Activated T-helper 1 cell treated with anti-CD3 and anti-CD28 coated beads, Interleukin-12 subunit alpha, Interleukin-12 subunit beta, Interleukin-2, Interleukin-4 antibody, amounts not matched to agents 30 ng/mL and 10 ng/mL and 1 ng/mL, durations not matched to agents 14 hours and 24 hours and 36 hours (primary cell): ENCODE measurements at regions of chr17 and their contacts with region 1.

Region 1: DNA sequence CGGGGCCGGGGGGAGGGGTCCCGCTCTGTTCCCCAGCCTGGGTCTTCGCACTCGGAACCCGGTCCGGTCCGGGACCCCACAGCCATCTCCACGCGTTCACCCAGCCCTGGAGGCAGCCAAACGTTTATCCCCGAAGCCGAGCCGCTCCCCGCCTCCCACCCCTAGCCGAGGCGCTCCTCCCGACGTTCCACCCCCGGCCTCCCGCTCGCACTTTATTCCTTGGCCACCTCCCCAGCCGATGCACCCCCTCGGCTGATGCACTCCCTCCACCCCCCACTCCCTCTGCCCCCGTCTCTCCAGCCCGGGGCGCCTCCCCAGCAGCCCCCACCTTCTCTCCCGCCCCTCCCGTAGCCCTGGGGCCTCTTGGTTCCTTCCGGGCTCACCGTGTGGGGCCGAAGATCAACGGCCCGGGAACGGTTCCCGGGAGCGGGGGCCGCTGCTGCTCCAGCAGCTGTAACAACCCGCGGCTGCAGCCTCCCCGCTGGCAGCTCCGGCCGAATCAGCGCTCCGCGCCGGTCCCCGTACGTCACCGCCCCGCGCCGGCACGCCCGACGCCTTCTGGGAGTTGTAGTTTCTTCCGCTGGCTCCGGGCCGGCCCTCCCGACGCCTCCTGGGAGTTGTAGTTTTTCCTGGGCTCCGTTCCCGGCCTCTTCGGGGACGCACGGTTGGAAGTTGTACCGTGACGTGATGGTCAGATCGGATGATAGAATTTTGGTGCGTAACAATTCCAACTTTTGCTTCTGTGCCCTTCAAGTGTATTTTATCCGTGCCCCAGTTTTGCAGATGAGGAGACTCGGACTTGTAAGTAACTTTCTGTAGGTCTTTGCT is at the starts of genes LRRC3C and ORMDL3:
- DNase-seq: peak; percentile 91
- H3K4me3 Mint-ChIP-seq: peak within 1 kb of the TSS; percentile 97
- H3K27ac Mint-ChIP-seq: peak within 1 kb of the TSS; percentile 92
- H3K4me1 Mint-ChIP-seq: peaks cover 60% of the 10 kb centered on the region
- H3K27me3 Mint-ChIP-seq: no peaks in the 10 kb centered on the region
- total RNA-seq, gene LRRC3C: not detected in 2 replicates
- total RNA-seq, gene ORMDL3: 70.8 and 77.4 TPM in 2 replicates

Region 2: GRCh38 chr17:39461113-39461925 is 466.0 kb before region 1 on chr17 and contains the start of gene CDK12:
- intact Hi-C with region 1: loop called (anchors 5 kb)
- DNase-seq: peak; percentile 94
- H3K4me3 Mint-ChIP-seq: peak within 1 kb of the TSS; percentile 95
- H3K27ac Mint-ChIP-seq: peak within 1 kb of the TSS; percentile 98
- H3K4me1 Mint-ChIP-seq: peaks cover 44% of the 10 kb centered on the region
- H3K27me3 Mint-ChIP-seq: no peaks in the 10 kb centered on the region
- total RNA-seq, gene CDK12: 97.4 and 99.5 TPM in 2 replicates

Region 3: GRCh38 chr17:39754161-39754951 is 173.0 kb before region 1 on chr17:
- intact Hi-C with region 1: loop called (anchors 1 kb)
- DNase-seq: peak; percentile 97
- H3K4me3 Mint-ChIP-seq: peak overlapping the region; percentile 81
- H3K27ac Mint-ChIP-seq: peak overlapping the region; percentile 53
- H3K4me1 Mint-ChIP-seq: peaks cover 60% of the 10 kb centered on the region
- H3K27me3 Mint-ChIP-seq: no peaks in the 10 kb centered on the region

Region 4: GRCh38 chr17:39794249-39794970 is 132.9 kb before region 1 on chr17:
- intact Hi-C with region 1: loop called (anchors 1 kb)
- DNase-seq: no peak
- H3K4me3 Mint-ChIP-seq: peak overlapping the region; percentile 49
- H3K27ac Mint-ChIP-seq: peak overlapping the region; percentile 73
- H3K4me1 Mint-ChIP-seq: peaks cover 64% of the 10 kb centered on the region
- H3K27me3 Mint-ChIP-seq: no peaks in the 10 kb centered on the region

Region 5: GRCh38 chr17:39939588-39940419 is 12.5 kb after region 1 on chr17:
- intact Hi-C with region 1: loop called (anchors 1 kb)
- DNase-seq: peak; percentile 71
- H3K4me3 Mint-ChIP-seq: peak overlapping the region; percentile 31
- H3K27ac Mint-ChIP-seq: peak overlapping the region; percentile 87
- H3K4me1 Mint-ChIP-seq: peaks cover 25% of the 10 kb centered on the region
- H3K27me3 Mint-ChIP-seq: peaks cover 4% of the 10 kb centered on the region

Region 6: DNA sequence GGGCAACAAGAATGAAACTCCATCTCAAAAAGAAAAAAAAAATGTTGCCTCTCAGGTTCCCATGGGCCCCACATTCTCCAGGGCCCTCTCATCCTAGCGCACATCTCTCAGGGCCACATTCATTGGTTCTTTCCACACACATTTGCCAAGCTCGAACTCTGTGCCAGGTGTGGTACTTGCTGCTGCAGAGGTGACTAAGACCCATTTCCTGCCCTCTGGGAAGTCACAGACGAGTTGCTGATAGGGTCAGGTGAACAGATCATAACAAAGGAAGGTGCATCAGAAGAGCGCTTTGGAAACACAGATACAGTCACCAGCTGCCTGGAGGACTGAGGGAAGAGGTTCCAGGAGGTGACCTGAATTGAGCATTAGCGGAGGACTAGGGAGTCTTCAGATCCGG is 36.5 kb after region 1 on chr17:
- intact Hi-C with region 1: loop called (anchors 1 kb)
- DNase-seq: no peak
- H3K4me3 Mint-ChIP-seq: no peak overlapping the region
- H3K27ac Mint-ChIP-seq: peak overlapping the region; percentile 25
- H3K4me1 Mint-ChIP-seq: peaks cover 35% of the 10 kb centered on the region
- H3K27me3 Mint-ChIP-seq: peaks cover 7% of the 10 kb centered on the region

Region 7: DNA sequence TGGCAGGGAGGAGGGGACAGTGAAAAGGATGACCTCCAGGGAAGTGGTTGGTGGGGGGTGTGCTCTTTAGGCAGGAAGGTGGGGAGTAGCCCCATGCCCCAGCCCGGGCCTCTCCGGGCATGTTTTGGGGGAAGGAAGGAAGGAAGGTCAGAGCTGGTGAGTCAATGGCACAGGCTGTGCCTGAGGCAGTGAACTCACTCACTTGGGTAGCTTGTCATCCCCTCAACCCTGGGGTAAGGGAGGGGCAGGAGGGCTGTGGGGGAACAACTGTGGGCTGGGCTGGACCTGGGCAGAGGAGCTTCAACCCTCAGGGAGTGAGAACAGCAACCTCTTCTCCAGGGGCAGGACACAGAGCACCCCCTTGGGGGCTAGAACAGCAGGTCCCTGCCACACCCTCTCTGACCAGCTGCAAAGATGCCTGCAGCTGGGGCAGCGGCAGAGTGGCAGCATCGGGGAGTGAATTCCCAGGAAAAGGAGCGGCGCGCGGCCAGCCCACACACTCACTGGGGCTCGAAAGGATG is 94.2 kb after region 1 on chr17:
- intact Hi-C with region 1: no loop called
- DNase-seq: no peak
- H3K4me3 Mint-ChIP-seq: no peak overlapping the region
- H3K27ac Mint-ChIP-seq: no peak overlapping the region
- H3K4me1 Mint-ChIP-seq: peaks cover 15% of the 10 kb centered on the region
- H3K27me3 Mint-ChIP-seq: no peaks in the 10 kb centered on the region

Region 8: DNA sequence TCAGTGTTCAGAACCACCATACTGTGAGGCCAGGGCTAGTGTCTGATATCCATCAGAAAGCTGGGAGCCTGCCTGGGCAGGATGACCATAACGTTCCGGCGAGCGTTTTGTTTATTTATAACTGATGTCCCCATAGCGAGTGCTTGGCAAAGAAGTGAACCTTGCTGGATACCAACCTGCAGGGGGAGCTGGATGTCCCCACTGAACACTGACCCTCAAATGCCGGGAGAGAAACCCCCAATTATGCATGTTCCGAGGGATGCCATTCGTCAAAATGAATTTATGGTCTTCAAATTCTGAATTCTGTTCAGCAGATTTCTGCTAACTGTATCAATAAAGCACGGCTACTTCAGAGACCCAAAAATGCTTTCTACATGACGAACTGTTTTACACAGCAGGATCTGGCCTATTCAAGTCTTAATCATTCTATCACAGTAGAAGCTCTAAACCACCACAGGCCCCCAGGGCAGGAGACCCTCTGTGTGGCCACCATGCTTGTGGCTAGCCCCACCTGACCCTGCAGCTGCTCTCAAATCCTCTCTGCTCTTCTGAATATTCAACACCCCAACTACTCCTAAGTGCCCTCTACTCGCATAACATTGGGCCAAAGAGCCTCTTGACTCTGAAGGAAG is 111.7 kb after region 1 on chr17:
- intact Hi-C with region 1: no loop called
- DNase-seq: no peak
- H3K4me3 Mint-ChIP-seq: no peak overlapping the region
- H3K27ac Mint-ChIP-seq: peak overlapping the region; percentile 0
- H3K4me1 Mint-ChIP-seq: no peaks in the 10 kb centered on the region
- H3K27me3 Mint-ChIP-seq: no peaks in the 10 kb centered on the region

Region 9: DNA sequence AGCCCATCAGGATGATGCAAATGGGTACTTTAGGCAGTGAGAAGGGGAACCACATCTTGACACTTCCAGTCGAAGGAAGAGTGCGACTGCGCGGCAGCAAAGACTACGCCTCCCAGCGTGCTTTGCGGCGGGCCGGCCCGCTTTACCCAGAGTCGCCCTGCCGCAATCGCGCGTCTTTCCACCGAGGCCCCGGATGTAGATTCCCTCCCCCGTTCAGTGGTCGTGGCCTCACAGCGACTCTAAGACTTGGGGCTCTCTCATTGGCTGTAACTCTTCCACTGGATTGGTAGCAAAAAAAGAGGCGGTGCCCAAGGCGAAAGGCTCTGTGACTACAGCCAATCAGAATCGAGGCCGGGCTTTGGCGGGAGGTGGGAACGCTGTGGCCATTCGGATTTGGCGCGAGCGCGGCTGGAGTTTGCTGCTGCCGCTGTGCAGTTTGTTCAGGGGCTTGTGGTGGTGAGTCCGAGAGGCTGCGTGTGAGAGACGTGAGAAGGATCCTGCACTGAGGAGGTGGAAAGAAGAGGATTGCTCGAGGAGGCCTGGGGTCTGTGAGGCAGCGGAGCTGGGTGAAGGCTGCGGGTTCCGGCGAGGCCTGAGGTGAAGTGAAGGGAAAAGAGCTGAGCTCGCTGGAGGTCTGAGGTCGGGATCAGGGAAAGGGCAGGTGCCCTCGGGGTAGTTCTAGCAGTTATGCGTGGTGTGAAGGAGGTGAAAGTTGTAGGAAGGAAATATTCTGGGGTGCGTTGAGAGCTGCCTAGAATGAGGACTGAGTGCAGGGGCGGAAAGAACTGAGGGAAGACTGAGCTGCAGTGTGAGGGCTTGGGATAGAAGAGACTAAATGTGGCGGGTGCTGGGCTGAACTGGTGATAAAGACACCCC is 360.4 kb after region 1 on chr17 and contains the start of gene CDC6:
- intact Hi-C with region 1: loop called (anchors 1 kb)
- DNase-seq: peak; percentile 98
- H3K4me3 Mint-ChIP-seq: peak within 1 kb of the TSS; percentile 99
- H3K27ac Mint-ChIP-seq: peak within 1 kb of the TSS; percentile 98
- H3K4me1 Mint-ChIP-seq: peaks cover 39% of the 10 kb centered on the region
- H3K27me3 Mint-ChIP-seq: no peaks in the 10 kb centered on the region
- total RNA-seq, gene CDC6: 130 and 135 TPM in 2 replicates